BJ (cell line): ENCODE measurements at regions of chr1 and their contacts with region 1.

Region 1: DNA sequence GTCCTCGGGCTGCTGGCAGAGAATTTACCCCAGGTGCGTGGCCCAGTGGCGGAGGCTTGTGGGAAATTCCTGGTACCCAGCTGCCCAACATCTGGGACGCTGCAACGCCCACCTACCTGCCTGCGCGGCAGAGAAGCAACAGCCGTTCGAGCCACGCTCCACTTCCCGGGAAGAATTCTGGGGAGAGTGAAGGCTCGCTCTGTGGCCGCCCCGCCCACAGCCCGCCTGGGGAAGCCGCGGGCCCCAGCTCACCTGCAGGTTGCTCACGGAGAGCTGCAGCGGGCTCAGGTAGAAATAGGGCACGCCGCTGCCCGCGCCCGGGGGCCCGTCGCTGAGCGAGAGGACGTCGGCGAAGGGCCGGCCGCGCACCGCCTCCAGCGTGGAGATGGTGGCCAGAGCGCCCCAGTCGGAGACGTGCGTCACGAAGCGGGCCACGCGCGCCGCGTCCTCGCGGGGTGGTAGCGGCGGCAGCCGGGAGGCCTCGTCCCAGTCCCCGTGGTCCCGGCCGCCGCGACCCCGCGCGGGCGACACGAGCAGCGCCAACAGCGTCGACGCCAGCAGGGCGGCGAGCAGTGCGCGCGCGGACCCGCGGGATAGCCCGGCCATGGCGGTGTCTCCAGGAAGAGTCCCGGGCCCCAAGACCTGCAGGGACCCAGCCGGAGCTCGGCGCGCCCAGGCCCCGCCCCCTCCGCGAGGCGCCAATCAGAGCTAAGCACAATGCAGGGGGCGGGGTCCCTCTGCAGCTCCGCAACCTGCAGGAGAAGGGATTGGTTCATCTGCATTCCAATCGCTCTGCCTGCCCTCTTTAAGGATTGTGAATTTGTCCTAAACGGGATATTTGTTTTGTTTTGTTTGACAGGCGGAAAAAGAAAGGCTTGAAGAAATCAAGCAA is at the start of gene CREG1:
- DNase-seq: peak; percentile 55
- H3K4me3 ChIP-seq: peak within 1 kb of the TSS; percentile 67
- H3K27me3 ChIP-seq: no peaks in the 10 kb centered on the region
- CTCF ChIP-seq: no peak
- polyA plus RNA-seq, gene CREG1: 27.5 and 54.5 TPM in 2 replicates

Region 2: DNA sequence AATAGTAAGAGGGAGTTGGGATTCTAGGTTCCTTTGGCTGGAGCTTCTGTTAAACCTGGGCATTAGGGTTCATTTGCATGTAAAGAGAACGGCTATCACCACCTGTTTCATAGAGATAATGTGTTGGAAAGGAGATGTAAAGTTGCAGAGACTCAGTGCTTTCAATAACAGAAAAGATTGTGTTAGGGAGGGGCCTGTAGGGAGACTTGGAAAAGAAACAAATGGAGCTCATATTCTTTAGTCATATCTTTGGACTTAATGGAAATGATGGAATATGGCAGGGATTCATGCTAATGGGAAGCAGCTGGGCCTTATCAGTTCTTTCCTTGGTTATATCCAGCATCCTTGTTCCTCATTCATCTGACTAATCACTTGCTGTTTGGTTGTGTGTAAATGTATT is 180.0 kb before region 1 on chr1:
- CTCF ChIA-PET with region 1: no interaction called
- POLR2A ChIA-PET with region 1: no interaction called
- DNase-seq: no peak
- H3K4me3 ChIP-seq: no peak overlapping the region
- H3K27me3 ChIP-seq: no peaks in the 10 kb centered on the region
- CTCF ChIP-seq: no peak

Region 3: GRCh38 chr1:167491586-167492461 is 61.6 kb before region 1 on chr1:
- CTCF ChIA-PET with region 1: no interaction called
- POLR2A ChIA-PET with region 1: no interaction called
- DNase-seq: no peak
- H3K4me3 ChIP-seq: no peak overlapping the region
- H3K27me3 ChIP-seq: peaks cover 1% of the 10 kb centered on the region; the same call in 1 of the 2 replicates
- CTCF ChIP-seq: no peak

Region 4: GRCh38 chr1:167542109-167543032 is 11.0 kb before region 1 on chr1:
- CTCF ChIA-PET with region 1: interaction called, 26 read pairs
- POLR2A ChIA-PET with region 1: interaction called, 3 read pairs
- DNase-seq: no peak
- H3K4me3 ChIP-seq: no peak overlapping the region
- H3K27me3 ChIP-seq: no peaks in the 10 kb centered on the region
- CTCF ChIP-seq: no peak

Region 5: DNA sequence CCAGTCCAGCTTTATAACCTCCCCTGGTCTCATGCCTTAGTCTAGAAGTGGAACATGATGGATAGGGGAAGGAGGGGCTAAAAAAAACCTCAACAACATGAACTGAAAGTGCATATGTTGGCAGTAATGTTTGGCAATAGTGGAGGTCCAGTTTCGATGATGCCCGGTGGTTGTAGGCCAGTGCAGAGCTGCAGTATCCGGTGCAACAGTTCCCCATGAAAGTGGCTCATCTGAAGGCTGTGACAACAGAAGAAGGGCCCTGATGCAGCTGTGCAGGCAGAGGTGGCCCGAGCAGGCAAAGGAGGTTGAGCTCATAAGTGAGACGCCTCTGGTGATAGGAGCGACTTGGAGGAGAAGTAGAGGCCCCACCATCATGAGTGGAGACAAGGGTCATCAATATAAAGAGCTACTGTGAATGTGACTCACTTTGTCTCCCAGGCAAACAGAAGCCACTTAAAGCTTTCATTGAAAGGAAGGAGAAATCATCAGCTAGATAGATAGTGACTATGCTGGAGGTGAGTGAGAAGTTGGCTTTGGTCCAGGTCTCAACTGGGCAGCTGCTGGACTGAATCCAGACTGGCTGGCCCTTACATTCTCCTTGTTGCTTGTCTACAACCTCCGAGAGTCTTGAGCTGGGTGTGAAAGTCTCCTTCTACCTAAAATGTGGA is 10.3 kb after region 1 on chr1:
- CTCF ChIA-PET with region 1: interaction called, 15 read pairs
- POLR2A ChIA-PET with region 1: no interaction called
- DNase-seq: no peak
- H3K4me3 ChIP-seq: no peak overlapping the region
- H3K27me3 ChIP-seq: 0 out of 2 replicates have a peak, but pooled peaks cover 1% of the 10 kb centered on the region
- CTCF ChIP-seq: no peak